HEK293 (cell line): ENCODE measurements at regions of chr1 and their contacts with region 1.

Region 1: GRCh38 chr1:23777979-23778814 is at the start of gene PITHD1:
- H3K4me3 ChIP-seq: peak within 1 kb of the TSS; percentile 95
- H3K27ac ChIP-seq: peak within 1 kb of the TSS; percentile 80
- H3K4me1 ChIP-seq: peaks cover 7% of the 10 kb centered on the region; the same call in 1 of the 2 replicates
- CTCF ChIP-seq: no peak

Region 2: GRCh38 chr1:23759277-23759676 is 18.9 kb before region 1 on chr1:
- CTCF ChIA-PET with region 1: no interaction called
- POLR2A ChIA-PET with region 1: no interaction called
- H3K4me3 ChIP-seq: no peak overlapping the region
- H3K27ac ChIP-seq: no peak overlapping the region
- H3K4me1 ChIP-seq: no peaks in the 10 kb centered on the region
- CTCF ChIP-seq: no peak

Region 3: GRCh38 chr1:23790696-23791515 is 12.7 kb after region 1 on chr1 and contains the start of gene LYPLA2:
- CTCF ChIA-PET with region 1: interaction called, 4 read pairs
- POLR2A ChIA-PET with region 1: interaction called, 101 read pairs
- H3K4me3 ChIP-seq: peak within 1 kb of the TSS; percentile 73
- H3K27ac ChIP-seq: peak within 1 kb of the TSS; percentile 26; the same call in 1 of the 2 replicates
- H3K4me1 ChIP-seq: peaks cover 9% of the 10 kb centered on the region; the same call in 1 of the 2 replicates
- CTCF ChIP-seq: no peak; the same call in 1 of the 2 replicates

Region 4: GRCh38 chr1:23930861-23931490 is 152.8 kb after region 1 on chr1:
- CTCF ChIA-PET with region 1: no interaction called
- POLR2A ChIA-PET with region 1: no interaction called
- H3K4me3 ChIP-seq: no peak overlapping the region
- H3K27ac ChIP-seq: no peak overlapping the region
- H3K4me1 ChIP-seq: no peaks in the 10 kb centered on the region
- CTCF ChIP-seq: no peak